ENCODE measurements at regions of chr10 and their contacts with region 1.

Region 1: GRCh38 chr10:17409170-17409733 is 45.1 kb downstream of the ST8SIA6 start:
- DNase-seq: peak in 1 of 35 experiments; percentile 64
- ATAC-seq: peak; percentile 62 to 87 (median 78)
- H3K4me3 ChIP-seq: no peak overlapping the region
- H3K4me3 Mint-ChIP-seq: peak overlapping the region in 1 of 3 donors; percentile 32
- H3K27ac ChIP-seq: no peak overlapping the region
- H3K27ac Mint-ChIP-seq: peak overlapping the region; percentile 81 to 88
- H3K4me1 ChIP-seq: peaks cover 7 to 12% of the 10 kb centered on the region in 2 experiments
- H3K4me1 Mint-ChIP-seq: peaks cover 24 to 34% (median 25%) of the 10 kb centered on the region in 3 donors
- H3K27me3 ChIP-seq: peaks cover 0 to 2% of the 10 kb centered on the region in 2 experiments
- H3K27me3 Mint-ChIP-seq: no peaks in the 10 kb centered on the region

Region 2: GRCh38 chr10:17265468-17265867 is 143.8 kb before region 1 on chr10:
- CTCF ChIA-PET with region 1: no interaction called
- POLR2A ChIA-PET with region 1: no interaction called
- DNase-seq: no peak
- ATAC-seq: no peak
- H3K4me3 ChIP-seq: no peak overlapping the region
- H3K4me3 Mint-ChIP-seq: no peak overlapping the region
- H3K27ac ChIP-seq: no peak overlapping the region
- H3K27ac Mint-ChIP-seq: no peak overlapping the region
- H3K4me1 ChIP-seq: no peaks in the 10 kb centered on the region
- H3K4me1 Mint-ChIP-seq: no peaks in the 10 kb centered on the region
- H3K27me3 ChIP-seq: peaks cover 0 to 12% of the 10 kb centered on the region in 2 experiments
- H3K27me3 Mint-ChIP-seq: peaks cover 8 to 15% of the 10 kb centered on the region in 2 donors

Region 3: GRCh38 chr10:17430647-17431355 is 21.5 kb after region 1 on chr10:
- CTCF ChIA-PET with region 1: interaction called, 15 to 19 read pairs
- POLR2A ChIA-PET with region 1: no interaction called
- DNase-seq: peak in 33 of 35 experiments; percentile 19 to 82 (median 57)
- ATAC-seq: no peak
- H3K4me3 ChIP-seq: no peak overlapping the region
- H3K4me3 Mint-ChIP-seq: peak overlapping the region in 2 of 3 donors; percentile 9 to 82
- H3K27ac ChIP-seq: no peak overlapping the region
- H3K27ac Mint-ChIP-seq: peak overlapping the region; percentile 5 to 51
- H3K4me1 ChIP-seq: peaks cover 41 to 44% of the 10 kb centered on the region in 2 experiments
- H3K4me1 Mint-ChIP-seq: peaks cover 53 to 58% (median 54%) of the 10 kb centered on the region in 3 donors
- H3K27me3 ChIP-seq: no peaks in the 10 kb centered on the region
- H3K27me3 Mint-ChIP-seq: peaks cover 5 to 6% of the 10 kb centered on the region in 2 donors